AG04449 (cell line): ENCODE measurements at regions of chr12 and their contacts with region 1.

Region 1: GRCh38 chr12:47651368-47652254 is 54.2 kb downstream of the RPAP3 start:
- DNase-seq: peak; percentile 4
- H3K4me3 ChIP-seq: no peak overlapping the region
- CTCF ChIP-seq: peak; percentile 44

Region 2: GRCh38 chr12:47672068-47672467 is 20.5 kb after region 1 on chr12:
- CTCF ChIA-PET with region 1: interaction called, 25 read pairs
- POLR2A ChIA-PET with region 1: no interaction called
- DNase-seq: no peak
- H3K4me3 ChIP-seq: no peak overlapping the region
- CTCF ChIP-seq: no peak